ENCODE measurements at regions of chr16 and their contacts with region 1.

Region 1: GRCh38 chr16:81873843-81874752 is 95.0 kb downstream of the PLCG2 start:
- DNase-seq: peak; percentile 84
- ATAC-seq: peak; percentile 88
- H3K4me3 Mint-ChIP-seq: no peak overlapping the region
- H3K27ac Mint-ChIP-seq: peak overlapping the region; percentile 26
- H3K4me1 Mint-ChIP-seq: peaks cover 27% of the 10 kb centered on the region
- H3K27me3 Mint-ChIP-seq: no peaks in the 10 kb centered on the region

Region 2: GRCh38 chr16:81279395-81279794 is 594.7 kb before region 1 on chr16:
- CTCF ChIA-PET with region 1: no interaction called
- DNase-seq: no peak
- ATAC-seq: no peak
- H3K4me3 Mint-ChIP-seq: no peak overlapping the region
- H3K27ac Mint-ChIP-seq: no peak overlapping the region
- H3K4me1 Mint-ChIP-seq: no peaks in the 10 kb centered on the region
- H3K27me3 Mint-ChIP-seq: peaks cover 4% of the 10 kb centered on the region

Region 3: DNA sequence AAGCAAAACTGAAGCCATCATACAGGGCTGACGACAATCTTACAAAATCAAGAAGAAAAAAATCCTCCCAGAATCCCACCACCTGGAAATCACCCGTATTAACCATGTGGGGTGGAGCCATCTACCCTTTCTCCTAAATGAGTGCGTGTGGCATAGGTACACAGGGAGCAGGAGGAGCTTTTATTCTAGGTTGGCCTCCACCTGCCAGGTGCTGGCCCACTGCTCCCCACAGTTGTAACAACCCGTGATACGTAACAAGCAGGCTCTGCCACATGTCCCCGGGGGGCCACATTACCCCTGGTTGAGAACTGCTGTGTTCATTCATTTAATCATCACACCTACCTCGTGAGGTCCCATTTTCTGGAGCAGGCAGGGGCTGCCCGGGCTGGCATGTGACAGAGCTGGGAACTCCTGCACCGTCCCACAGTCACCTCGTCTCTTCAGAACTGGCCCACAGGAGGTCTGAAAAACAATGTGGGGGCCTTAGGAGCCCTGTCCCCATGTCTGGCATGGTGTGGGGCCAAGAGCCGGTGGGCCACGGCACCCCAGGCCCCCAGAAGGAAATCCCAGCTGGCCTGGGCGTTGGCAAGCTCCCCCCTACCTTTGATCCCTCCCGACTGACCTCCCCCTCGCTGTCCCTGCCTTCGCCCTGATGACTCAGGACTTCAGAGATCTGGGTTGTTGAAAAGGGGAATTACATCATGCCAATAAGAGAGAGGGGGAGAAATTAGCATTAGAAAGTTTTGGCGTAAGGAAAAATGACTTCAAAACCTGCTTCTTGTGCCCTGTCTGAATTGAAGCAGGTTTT is 416.6 kb before region 1 on chr16:
- CTCF ChIA-PET with region 1: no interaction called
- DNase-seq: no peak
- ATAC-seq: no peak
- H3K4me3 Mint-ChIP-seq: no peak overlapping the region
- H3K27ac Mint-ChIP-seq: no peak overlapping the region
- H3K4me1 Mint-ChIP-seq: peaks cover 22% of the 10 kb centered on the region
- H3K27me3 Mint-ChIP-seq: no peaks in the 10 kb centered on the region

Region 4: GRCh38 chr16:81752225-81752875 is 121.7 kb before region 1 on chr16:
- CTCF ChIA-PET with region 1: interaction called, 10 read pairs
- DNase-seq: no peak
- ATAC-seq: peak; percentile 17
- H3K4me3 Mint-ChIP-seq: no peak overlapping the region
- H3K27ac Mint-ChIP-seq: no peak overlapping the region
- H3K4me1 Mint-ChIP-seq: peaks cover 41% of the 10 kb centered on the region
- H3K27me3 Mint-ChIP-seq: no peaks in the 10 kb centered on the region

Region 5: DNA sequence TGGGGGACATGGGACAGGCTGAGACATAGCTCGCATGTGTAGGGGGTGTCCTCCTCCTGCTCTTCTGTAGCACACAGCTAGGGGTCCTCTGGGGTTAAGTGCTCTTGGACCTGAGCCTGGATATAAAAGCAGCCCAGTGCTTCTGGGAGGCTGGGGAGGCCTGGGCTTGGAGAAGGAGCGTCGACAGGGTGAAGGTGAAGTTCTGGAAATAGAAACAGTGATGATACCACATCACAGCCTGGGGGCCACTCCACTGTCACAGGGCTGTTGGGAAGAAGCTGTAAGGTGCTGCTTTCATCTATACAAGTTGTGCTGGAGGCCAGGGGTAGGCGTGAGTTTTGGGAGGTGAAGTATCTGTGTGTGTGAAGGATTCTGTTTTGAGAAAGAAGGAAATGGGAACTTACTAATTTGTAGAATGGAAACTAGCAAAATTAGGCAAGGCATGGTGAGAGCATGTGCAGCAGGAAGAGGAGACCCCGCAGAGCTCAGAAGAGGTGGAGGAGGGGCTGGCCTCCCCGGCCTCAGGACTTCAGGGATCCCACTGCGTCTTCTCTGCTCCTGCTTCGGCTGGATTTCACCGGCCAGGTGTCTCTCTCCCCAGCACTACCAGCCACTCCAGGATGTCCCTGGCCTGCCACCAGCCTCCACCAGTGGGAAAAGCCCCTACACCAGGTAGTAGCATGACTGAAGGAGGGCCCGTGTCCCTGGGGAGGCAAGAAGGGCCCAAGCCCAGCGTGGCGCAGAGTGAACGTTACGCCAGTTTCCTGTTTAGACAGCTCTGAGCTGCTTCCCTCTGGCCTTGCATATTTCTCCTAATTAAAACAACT is 75.6 kb before region 1 on chr16:
- CTCF ChIA-PET with region 1: interaction called, 18 read pairs
- DNase-seq: peak; percentile 75
- ATAC-seq: peak; percentile 73
- H3K4me3 Mint-ChIP-seq: peak overlapping the region; percentile 66
- H3K27ac Mint-ChIP-seq: peak overlapping the region; percentile 96
- H3K4me1 Mint-ChIP-seq: peaks cover 51% of the 10 kb centered on the region
- H3K27me3 Mint-ChIP-seq: no peaks in the 10 kb centered on the region

Region 6: GRCh38 chr16:81852351-81852750 is 21.7 kb before region 1 on chr16:
- CTCF ChIA-PET with region 1: interaction called, 11 read pairs
- DNase-seq: no peak
- ATAC-seq: no peak
- H3K4me3 Mint-ChIP-seq: no peak overlapping the region
- H3K27ac Mint-ChIP-seq: no peak overlapping the region
- H3K4me1 Mint-ChIP-seq: peaks cover 24% of the 10 kb centered on the region
- H3K27me3 Mint-ChIP-seq: no peaks in the 10 kb centered on the region

Region 7: DNA sequence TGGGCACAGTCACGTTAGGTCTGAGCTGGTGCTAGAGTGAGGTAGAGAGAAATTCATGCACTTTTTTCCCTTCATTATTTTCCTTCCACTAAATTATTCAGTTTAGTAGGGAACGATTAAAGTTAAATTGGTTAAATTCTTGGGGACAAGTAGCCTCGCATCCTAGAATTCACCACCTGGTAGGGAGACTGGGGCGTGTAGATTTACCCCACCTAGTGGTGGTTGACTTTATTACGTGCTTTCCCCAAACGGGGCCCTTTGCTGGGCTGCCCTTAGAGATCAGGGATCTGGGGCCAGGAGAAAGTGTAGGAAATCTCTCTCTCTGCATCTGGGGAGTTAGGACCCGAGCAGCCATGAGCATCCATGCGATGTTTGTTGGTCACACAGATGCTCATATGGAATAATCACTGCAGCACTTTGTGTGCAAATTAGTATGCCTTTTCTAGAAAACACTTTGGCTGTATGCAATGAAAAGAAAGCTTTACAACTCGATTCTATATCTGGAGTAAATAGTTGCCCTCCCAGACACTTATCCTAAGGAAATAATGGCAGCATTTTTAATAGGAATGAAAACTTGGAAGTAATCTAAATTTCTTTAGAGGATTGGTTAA is 12.0 kb after region 1 on chr16:
- CTCF ChIA-PET with region 1: interaction called, 70 read pairs
- DNase-seq: peak; percentile 45
- ATAC-seq: peak; percentile 69
- H3K4me3 Mint-ChIP-seq: no peak overlapping the region
- H3K27ac Mint-ChIP-seq: no peak overlapping the region
- H3K4me1 Mint-ChIP-seq: peaks cover 4% of the 10 kb centered on the region
- H3K27me3 Mint-ChIP-seq: no peaks in the 10 kb centered on the region

Region 8: DNA sequence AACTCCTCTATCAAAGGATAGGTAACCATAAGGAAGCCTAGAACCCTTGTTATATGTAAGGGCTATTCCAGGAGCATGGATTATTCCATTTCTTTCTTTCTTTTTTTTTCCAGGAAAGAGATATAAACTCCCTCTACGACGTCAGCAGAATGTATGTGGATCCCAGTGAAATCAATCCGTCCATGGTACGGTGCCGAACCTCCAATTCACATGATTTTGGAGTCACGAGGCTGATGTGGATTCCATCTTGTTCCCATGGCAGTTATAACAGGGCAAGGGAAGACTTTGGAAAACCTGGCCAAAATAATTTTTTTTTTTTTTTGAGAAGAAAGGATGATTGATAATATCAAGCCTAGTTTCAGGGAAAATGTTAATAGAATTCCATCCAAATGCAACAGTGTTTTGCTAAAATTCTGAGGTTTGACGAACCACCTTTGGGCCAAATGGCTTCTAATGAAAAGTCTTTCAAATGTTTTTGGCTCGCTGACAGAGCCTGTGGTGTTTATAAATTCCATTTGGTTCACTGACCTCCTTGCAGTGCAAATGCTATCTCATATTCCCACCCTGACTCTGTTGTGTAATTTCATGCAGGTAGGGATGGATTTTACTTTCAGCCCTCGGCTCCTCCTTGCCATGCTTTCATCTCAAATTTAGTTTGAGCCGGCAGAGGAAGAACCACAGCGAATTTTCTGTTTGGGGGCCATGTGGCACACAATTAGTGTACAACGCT is 47.2 kb after region 1 on chr16:
- CTCF ChIA-PET with region 1: no interaction called
- DNase-seq: no peak
- ATAC-seq: no peak
- H3K4me3 Mint-ChIP-seq: no peak overlapping the region
- H3K27ac Mint-ChIP-seq: no peak overlapping the region
- H3K4me1 Mint-ChIP-seq: no peaks in the 10 kb centered on the region
- H3K27me3 Mint-ChIP-seq: no peaks in the 10 kb centered on the region

Region 9: GRCh38 chr16:82031116-82032084 is 157.3 kb after region 1 on chr16:
- CTCF ChIA-PET with region 1: no interaction called
- DNase-seq: no peak
- ATAC-seq: no peak
- H3K4me3 Mint-ChIP-seq: no peak overlapping the region
- H3K27ac Mint-ChIP-seq: no peak overlapping the region
- H3K4me1 Mint-ChIP-seq: no peaks in the 10 kb centered on the region
- H3K27me3 Mint-ChIP-seq: peaks cover 14% of the 10 kb centered on the region